ENCODE measurements at regions of chr22 and their contacts with region 1.

Region 1: DNA sequence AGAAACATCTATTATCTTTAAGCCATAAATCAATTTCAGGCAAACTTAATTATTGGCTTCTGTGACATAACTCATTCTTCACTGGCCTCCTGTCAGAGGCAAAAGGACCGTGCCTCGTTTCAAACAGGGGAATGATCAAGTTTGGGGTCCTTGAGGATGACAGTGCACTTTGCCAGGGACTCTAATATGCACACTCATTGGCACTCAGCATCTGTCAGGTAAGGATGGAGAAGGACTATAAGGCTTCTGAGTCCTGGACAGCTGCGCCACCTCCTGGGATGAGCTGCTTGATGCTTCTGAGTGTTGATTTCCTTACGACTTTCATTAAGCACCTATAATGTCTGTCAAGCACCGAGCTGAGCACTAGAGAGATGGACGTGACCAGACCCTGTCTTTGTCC is 20.2 kb downstream of the BPIFC start:
- DNase-seq: peak; percentile 25
- H3K4me3 Mint-ChIP-seq: no peak overlapping the region
- H3K27ac Mint-ChIP-seq: no peak overlapping the region
- H3K4me1 Mint-ChIP-seq: peaks cover 4% of the 10 kb centered on the region
- H3K27me3 Mint-ChIP-seq: no peaks in the 10 kb centered on the region
- CTCF ChIP-seq: peak; percentile 31

Region 2: GRCh38 chr22:32469797-32470212 is 25.7 kb after region 1 on chr22:
- CTCF ChIA-PET with region 1: interaction called, 14 read pairs
- POLR2A ChIA-PET with region 1: interaction called, 6 read pairs
- intact Hi-C with region 1: no loop called
- DNase-seq: no peak
- H3K4me3 Mint-ChIP-seq: no peak overlapping the region
- H3K27ac Mint-ChIP-seq: no peak overlapping the region
- H3K4me1 Mint-ChIP-seq: peaks cover 17% of the 10 kb centered on the region
- H3K27me3 Mint-ChIP-seq: peaks cover 20% of the 10 kb centered on the region
- CTCF ChIP-seq: no peak